Esophagus squamous epithelium (tissue), 5 donors: ENCODE measurements at regions of chr6 and their contacts with region 1.

Region 1: DNA sequence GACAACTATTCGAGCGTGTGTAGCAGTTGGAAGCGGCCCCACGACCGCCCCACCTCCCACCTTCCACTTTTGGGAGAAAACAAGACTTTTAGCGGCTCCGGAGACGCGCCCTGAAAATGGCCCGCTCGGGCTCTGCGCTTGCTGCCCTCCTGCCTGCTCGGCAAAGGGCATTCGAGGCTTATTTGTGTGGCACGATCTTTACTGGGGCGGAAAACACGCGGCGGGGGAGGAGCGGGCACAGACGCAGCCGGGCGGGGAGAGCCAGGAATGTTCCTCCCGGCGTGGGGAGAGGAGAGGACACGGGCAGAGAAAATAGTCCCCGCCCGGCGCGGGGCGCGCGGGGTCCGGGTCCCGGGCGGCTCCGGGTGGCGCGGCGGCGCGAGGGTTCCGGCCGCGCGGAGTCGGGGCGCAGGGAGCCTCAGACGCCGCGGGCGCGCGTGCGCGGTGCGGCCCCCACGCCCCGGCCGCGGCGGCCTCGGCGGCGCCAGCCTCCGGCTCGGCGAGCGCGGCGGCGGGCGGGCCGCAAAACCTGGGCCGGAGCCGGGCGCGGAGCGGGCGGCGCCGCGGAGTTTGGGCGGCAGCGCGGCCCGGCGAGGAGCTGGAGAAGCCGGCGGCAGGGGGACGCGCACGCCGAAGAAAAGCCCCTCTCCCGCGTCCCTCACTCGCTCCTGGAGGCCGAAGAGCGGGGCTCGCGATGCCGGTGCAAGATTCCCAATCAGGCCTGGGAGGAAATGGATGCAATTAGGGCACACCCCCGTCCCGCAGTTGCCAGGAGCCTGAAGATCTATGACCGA is 90.0 kb upstream of the ARID1B start:
- DNase-seq: peak; percentile 40
- H3K4me3 ChIP-seq: peak overlapping the region; percentile 58 to 90 (median 74)
- H3K27ac ChIP-seq: peak overlapping the region; percentile 96 to 99 (median 98)
- H3K4me1 ChIP-seq: peaks cover 0 to 21% (median 8%) of the 10 kb centered on the region in 3 donors
- H3K27me3 ChIP-seq: no peaks in the 10 kb centered on the region
- CTCF ChIP-seq: no peak
- POLR2A ChIP-seq: peak in 2 of 4 donors; percentile 81 to 93

Region 2: DNA sequence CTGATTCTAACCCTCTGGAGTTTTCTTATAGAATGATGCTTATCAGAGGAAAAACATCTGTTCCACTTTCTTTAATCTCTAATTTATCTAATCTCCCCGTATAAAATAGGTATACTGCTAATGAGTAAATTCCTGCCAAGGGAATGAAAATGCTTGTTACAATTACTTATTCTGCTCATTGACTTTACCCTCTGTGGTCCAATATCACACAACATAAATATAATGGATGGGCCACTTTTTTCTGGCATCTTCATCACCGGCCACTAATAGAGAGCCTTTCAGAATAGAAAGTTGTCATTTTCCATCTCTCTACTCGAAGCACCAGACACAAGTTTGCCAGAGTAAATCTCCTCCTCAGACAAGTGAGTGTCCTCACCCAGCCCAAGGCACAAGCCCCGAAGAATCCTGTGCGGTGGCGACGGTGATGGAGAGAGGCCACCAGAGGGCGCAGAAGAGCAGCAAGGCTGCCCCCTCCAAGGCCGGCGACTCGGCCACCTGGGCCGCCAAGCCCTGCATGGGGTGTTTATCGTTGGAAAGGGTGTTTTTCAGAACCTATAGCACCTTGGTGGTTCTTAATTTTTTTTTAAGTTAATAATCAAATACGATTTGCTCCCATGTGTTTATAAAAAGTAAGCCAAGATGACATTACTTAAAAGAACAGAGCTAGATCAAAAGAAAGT is 122.9 kb before region 1 on chr6:
- intact Hi-C with region 1: loop called (anchors 10 kb)
- DNase-seq: peak; percentile 34
- H3K4me3 ChIP-seq: no peak overlapping the region
- H3K27ac ChIP-seq: no peak overlapping the region
- H3K4me1 ChIP-seq: peaks cover 0 to 14% (median 4%) of the 10 kb centered on the region in 3 donors
- H3K27me3 ChIP-seq: no peaks in the 10 kb centered on the region
- CTCF ChIP-seq: peak; percentile 53 to 93 (median 91)
- POLR2A ChIP-seq: no peak

Region 3: DNA sequence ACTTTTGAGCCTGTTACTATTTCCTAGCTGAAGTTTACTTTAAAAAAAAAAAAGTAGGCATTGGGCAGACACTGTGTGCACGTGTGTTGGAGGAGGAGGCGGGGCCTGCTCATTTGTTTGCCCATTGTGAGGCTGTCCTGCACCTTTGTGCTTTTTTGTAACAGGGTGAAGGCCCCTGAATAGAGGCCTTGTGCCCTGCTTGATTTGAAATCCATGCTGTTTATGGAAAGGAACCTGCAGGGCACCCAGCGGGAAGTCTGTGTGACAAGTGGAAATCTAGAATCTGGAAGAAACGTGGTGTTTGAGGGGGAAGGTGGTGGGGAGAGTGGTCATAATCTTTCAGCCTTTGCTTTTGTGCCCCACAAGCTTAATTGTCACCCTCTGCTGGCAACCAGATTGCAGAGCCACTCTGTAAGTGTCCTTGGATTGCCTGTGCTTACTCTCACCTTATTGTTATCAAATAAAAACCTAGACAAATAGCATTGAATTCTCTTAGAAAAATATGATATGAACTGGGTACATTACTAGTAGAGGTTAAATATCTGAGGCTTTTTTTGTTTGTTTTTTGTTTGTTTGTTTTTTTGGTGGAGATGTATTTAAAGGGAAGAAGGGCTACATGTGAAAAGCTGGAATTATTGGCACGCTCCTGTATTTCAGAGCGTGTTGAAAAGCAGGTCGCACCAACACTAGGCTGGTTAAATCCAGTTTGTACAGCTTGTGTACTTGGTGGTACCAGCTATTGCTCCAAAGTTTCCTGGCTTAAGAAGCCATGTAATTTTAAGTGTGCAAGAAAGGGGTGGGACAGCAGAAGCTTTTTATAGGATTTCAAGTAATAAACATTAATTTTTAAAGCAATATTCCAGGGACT is 246.2 kb after region 1 on chr6:
- intact Hi-C with region 1: no loop called
- DNase-seq: no peak
- H3K4me3 ChIP-seq: no peak overlapping the region
- H3K27ac ChIP-seq: peak overlapping the region in 3 of 4 donors; percentile 39 to 70 (median 56)
- H3K4me1 ChIP-seq: peaks cover 0 to 43% (median 17%) of the 10 kb centered on the region in 3 donors
- H3K27me3 ChIP-seq: no peaks in the 10 kb centered on the region
- CTCF ChIP-seq: no peak
- POLR2A ChIP-seq: no peak

Region 4: GRCh38 chr6:157034436-157035230 is 347.4 kb after region 1 on chr6:
- intact Hi-C with region 1: loop called (anchors 10 kb)
- DNase-seq: no peak
- H3K4me3 ChIP-seq: no peak overlapping the region
- H3K27ac ChIP-seq: peak overlapping the region in 3 of 4 donors; percentile 81 to 86 (median 85)
- H3K4me1 ChIP-seq: peaks cover 20 to 85% (median 37%) of the 10 kb centered on the region in 3 donors
- H3K27me3 ChIP-seq: no peaks in the 10 kb centered on the region
- CTCF ChIP-seq: peak; percentile 34 to 76 (median 64)
- POLR2A ChIP-seq: no peak

Region 5: DNA sequence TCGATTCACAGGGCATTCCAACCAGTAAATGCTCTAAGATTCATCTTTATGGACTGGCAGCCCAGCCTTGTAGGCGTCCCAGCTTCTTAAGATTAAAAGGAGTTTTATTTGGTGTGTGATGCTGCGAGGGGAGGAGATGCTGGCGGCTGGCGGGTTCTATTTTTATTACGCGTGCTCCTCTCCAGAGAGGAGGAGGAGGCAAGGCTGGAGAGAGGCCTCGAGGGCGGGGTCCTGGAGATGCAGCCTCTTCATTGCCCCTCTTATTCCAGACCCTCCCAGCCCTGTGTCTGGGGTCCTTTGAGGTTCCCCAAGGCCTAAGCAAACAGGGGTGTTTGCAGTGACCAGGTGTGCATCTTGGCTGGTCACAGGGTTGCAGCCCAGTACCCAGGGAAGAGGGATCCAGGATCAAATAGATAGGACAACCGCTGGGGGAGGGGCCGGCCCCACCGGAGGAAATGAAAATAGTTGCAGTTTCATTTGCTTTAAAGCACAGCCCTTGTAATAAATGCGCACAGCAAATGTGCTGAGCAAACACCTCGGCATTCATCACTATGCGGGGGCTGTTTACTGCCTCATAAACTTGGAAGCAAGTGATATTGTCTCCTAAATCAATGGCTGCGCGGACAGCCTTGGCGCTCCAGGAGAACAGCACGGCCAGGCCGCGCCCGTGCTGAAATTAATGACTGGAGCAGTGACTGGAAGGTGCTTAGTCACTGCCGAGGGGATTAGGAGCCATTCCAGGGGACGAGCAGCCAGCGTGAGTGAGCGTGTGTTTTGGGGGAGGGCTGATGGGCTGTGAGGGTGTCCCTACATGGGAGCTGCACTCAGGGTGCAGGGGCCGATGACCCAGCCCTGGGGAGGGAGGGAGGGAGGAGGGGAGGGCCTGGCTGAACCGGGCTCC is 553.1 kb after region 1 on chr6:
- intact Hi-C with region 1: no loop called
- DNase-seq: no peak
- H3K4me3 ChIP-seq: peak overlapping the region; percentile 13 to 56 (median 34)
- H3K27ac ChIP-seq: peak overlapping the region; percentile 82 to 92 (median 87)
- H3K4me1 ChIP-seq: peaks cover 35 to 82% (median 39%) of the 10 kb centered on the region in 3 donors
- H3K27me3 ChIP-seq: peaks cover 0 to 16% (median 3%) of the 10 kb centered on the region in 4 donors
- CTCF ChIP-seq: no peak
- POLR2A ChIP-seq: peak in 1 of 4 donors; percentile 33